Activated naive CD4-positive, alpha-beta T cell treated with anti-CD3 and anti-CD28 coated beads, Interleukin-2, amount 10 ng/mL, durations not matched to agents 7 days and 5 days (primary cell): ENCODE measurements at regions of chr3 and their contacts with region 1.

Region 1: DNA sequence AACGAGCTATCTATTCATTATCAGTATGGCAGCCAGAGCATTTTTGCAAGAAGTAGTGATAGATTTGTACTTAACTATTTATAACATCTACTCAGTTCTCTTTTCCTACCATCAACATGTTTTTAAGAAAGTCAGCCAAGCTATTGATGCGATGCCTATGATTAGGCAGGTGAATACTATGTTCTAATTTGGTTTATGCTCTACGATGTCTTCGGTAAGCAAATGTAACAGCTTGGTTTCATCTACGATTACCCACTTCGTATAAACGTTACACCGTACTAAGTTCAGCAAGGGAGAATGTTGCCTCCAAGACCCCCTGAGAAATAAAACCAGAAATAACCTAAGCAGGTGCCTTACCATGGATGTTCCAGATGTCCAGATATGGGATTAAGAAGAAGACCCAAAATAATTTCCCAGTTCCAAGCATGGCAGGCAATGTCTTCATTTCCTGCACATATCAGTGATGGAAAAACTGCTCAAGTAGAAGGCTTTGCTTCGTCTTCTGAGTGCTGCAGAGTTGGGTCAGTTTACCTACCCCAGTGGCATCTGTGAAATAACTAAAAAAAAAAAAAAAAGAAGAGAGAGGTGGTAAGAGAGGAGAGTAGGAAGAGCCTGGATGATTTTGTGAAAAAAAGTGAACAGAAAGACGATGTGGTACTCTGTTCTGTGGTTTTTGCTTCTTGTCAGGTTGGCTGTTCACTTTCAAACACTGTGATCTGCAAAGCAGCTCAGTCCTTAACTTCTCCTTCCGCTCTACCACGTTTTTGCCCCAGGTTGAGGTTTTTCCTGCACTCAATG is at the start of gene BTLA:
- DNase-seq: peak; percentile 60
- H3K4me3 Mint-ChIP-seq: peak within 1 kb of the TSS; percentile 100
- H3K27ac Mint-ChIP-seq: peak within 1 kb of the TSS; percentile 94
- H3K4me1 Mint-ChIP-seq: peaks cover 45% of the 10 kb centered on the region
- H3K27me3 Mint-ChIP-seq: no peaks in the 10 kb centered on the region

Region 2: GRCh38 chr3:112333002-112333380 is 166.1 kb before region 1 on chr3 and contains the start of gene CD200:
- CTCF ChIA-PET with region 1: interaction called, 15 read pairs
- DNase-seq: peak; percentile 72
- H3K4me3 Mint-ChIP-seq: peak within 1 kb of the TSS; percentile 85
- H3K27ac Mint-ChIP-seq: peak within 1 kb of the TSS; percentile 88
- H3K4me1 Mint-ChIP-seq: peaks cover 54% of the 10 kb centered on the region
- H3K27me3 Mint-ChIP-seq: no peaks in the 10 kb centered on the region

Region 3: GRCh38 chr3:112482675-112483074 is 16.4 kb before region 1 on chr3:
- CTCF ChIA-PET with region 1: no interaction called
- DNase-seq: no peak
- H3K4me3 Mint-ChIP-seq: peak overlapping the region; percentile 35
- H3K27ac Mint-ChIP-seq: peak overlapping the region; percentile 86
- H3K4me1 Mint-ChIP-seq: peaks cover 74% of the 10 kb centered on the region
- H3K27me3 Mint-ChIP-seq: no peaks in the 10 kb centered on the region

Region 4: DNA sequence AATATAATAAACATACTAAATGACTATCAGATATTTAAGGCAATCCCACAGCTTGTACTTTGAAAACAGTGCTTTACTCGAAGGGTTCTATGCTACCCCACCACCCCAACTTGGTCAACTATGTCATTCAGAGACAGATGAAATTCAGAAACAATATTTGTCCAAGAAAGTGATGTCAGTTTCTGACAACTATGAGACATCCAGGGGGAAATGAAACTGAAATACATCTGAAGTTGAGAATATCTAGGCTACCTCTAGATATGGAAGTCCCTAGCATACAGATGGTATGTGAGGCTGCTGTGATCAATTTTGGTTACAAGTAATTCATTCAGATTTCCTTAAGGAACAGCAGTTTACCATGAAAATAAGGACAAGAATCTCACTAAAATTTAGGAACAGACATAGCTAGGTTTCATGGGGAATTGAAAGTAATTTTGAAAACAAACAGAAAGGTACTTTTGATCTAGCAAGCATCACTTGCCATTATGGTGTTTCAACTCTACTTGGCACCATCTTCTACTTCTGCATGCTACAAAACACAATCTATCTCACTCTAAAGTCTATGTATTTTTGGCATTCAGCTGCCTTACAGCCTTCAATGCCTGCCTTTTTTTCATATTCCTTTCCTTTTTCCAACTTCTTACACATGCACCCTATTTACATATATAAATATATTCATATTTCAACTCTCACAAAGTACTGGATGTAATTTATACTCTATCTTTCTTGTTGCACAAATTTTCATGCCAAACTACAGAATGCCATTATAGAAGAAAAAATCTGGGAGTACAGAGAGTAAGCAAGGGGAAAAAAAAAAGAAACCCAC is 40.9 kb after region 1 on chr3:
- CTCF ChIA-PET with region 1: no interaction called
- DNase-seq: no peak
- H3K4me3 Mint-ChIP-seq: no peak overlapping the region
- H3K27ac Mint-ChIP-seq: no peak overlapping the region
- H3K4me1 Mint-ChIP-seq: peaks cover 7% of the 10 kb centered on the region
- H3K27me3 Mint-ChIP-seq: no peaks in the 10 kb centered on the region